HepG2 (cell line): ENCODE measurements at regions of chr12 and their contacts with region 1.

Region 1: GRCh38 chr12:16939871-16940306 is 333.9 kb upstream of the LMO3 start:
- DNase-seq: peak; percentile 80
- ATAC-seq: peak; percentile 99
- H3K4me3 ChIP-seq: no peak overlapping the region
- H3K27ac ChIP-seq: no peak overlapping the region
- H3K4me1 ChIP-seq: no peaks in the 10 kb centered on the region
- H3K27me3 ChIP-seq: no peaks in the 10 kb centered on the region
- CTCF ChIP-seq: peak; percentile 80
- EP300 ChIP-seq: no peak
- POLR2A ChIP-seq: no peak
- RAD21 ChIP-seq: peak; percentile 71; the same call in 1 of the 2 replicates

Region 2: GRCh38 chr12:17588968-17589367 is 649.1 kb after region 1 on chr12:
- CTCF ChIA-PET with region 1: no interaction called
- POLR2A ChIA-PET with region 1: no interaction called
- in situ Hi-C with region 1: no loop called
- intact Hi-C with region 1: loop called (anchors 1 kb)
- DNase-seq: peak; percentile 2
- ATAC-seq: peak; percentile 56; the same call in 2 of the 3 replicates
- H3K4me3 ChIP-seq: no peak overlapping the region
- H3K27ac ChIP-seq: no peak overlapping the region
- H3K4me1 ChIP-seq: no peaks in the 10 kb centered on the region
- H3K27me3 ChIP-seq: no peaks in the 10 kb centered on the region
- CTCF ChIP-seq: peak; percentile 31
- EP300 ChIP-seq: no peak
- POLR2A ChIP-seq: no peak
- RAD21 ChIP-seq: no peak

Region 3: GRCh38 chr12:17642340-17642650 is 702.4 kb after region 1 on chr12:
- CTCF ChIA-PET with region 1: no interaction called
- POLR2A ChIA-PET with region 1: no interaction called
- in situ Hi-C with region 1: no loop called
- intact Hi-C with region 1: loop called (anchors 5 kb)
- DNase-seq: no peak
- ATAC-seq: no peak
- H3K4me3 ChIP-seq: no peak overlapping the region
- H3K27ac ChIP-seq: no peak overlapping the region
- H3K4me1 ChIP-seq: no peaks in the 10 kb centered on the region
- H3K27me3 ChIP-seq: no peaks in the 10 kb centered on the region
- CTCF ChIP-seq: no peak
- EP300 ChIP-seq: no peak
- POLR2A ChIP-seq: no peak
- RAD21 ChIP-seq: no peak